Vagina (tissue), 2 donors: ENCODE measurements at regions of chr21 and their contacts with region 1.

Region 1: GRCh38 chr21:42107881-42108553 is 36.9 kb downstream of the UMODL1 start:
- DNase-seq: no peak
- H3K4me3 ChIP-seq: no peak overlapping the region
- H3K27ac ChIP-seq: no peak overlapping the region
- H3K4me1 ChIP-seq: peaks cover 14% of the 10 kb centered on the region
- H3K27me3 ChIP-seq: no peaks in the 10 kb centered on the region
- CTCF ChIP-seq: peak in 2 of 3 experiments; percentile 22 to 40
- POLR2A ChIP-seq: no peak

Region 2: DNA sequence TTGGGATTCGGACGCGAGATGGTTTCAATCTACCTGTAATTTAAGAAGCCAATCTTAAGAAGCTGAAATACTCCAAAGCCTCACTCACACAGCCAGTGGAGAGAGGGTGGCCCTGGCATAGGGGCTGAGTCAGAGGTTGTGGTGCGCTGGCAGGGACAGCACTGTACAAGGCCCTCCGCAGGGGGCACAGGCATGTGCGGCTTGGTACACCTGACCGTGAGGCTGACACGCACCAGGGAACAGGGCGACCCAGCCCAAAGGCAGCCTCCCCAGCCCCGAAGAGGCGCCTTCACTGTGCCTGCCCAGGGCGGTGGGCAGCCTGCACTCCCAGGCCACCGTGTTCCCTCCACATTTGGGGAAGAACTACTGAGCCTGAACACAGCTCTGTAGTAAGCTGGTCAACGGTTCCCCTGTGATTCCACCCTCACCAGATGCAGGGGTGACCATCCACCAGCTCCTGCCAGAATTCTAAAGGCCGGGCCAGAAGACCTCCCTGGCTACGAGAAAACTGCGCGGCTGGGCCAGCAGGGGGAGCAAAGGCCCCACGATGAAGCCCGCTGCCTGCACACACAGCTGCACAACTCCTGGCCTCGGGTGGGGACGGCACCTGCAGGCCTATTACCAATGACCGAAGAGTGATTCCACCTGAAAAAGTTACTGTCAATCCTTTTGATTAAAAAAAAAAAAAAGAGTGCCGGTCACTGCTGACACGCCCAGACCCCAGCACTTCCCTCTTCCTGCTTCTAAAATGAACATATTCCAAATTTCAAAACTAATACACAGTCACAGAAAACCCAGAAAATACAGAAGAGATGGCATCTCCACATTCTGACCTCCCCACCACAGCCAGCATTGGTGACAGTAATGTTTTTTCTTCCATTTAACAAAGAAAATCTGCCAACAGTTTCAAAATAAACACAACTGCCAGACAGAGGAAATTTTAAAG is 291.5 kb before region 1 on chr21:
- intact Hi-C with region 1: no loop called
- DNase-seq: no peak
- H3K4me3 ChIP-seq: no peak overlapping the region
- H3K27ac ChIP-seq: no peak overlapping the region
- H3K4me1 ChIP-seq: no peaks in the 10 kb centered on the region
- H3K27me3 ChIP-seq: no peaks in the 10 kb centered on the region
- CTCF ChIP-seq: peak; percentile 66 to 72 (median 69)
- POLR2A ChIP-seq: no peak

Region 3: GRCh38 chr21:42021366-42022090 is 86.5 kb before region 1 on chr21:
- intact Hi-C with region 1: loop called (anchors 10 kb)
- DNase-seq: no peak
- H3K4me3 ChIP-seq: no peak overlapping the region
- H3K27ac ChIP-seq: no peak overlapping the region
- H3K4me1 ChIP-seq: no peaks in the 10 kb centered on the region
- H3K27me3 ChIP-seq: no peaks in the 10 kb centered on the region
- CTCF ChIP-seq: no peak
- POLR2A ChIP-seq: no peak

Region 4: GRCh38 chr21:42360317-42360716 is 252.3 kb after region 1 on chr21:
- intact Hi-C with region 1: no loop called
- DNase-seq: no peak
- H3K4me3 ChIP-seq: no peak overlapping the region
- H3K27ac ChIP-seq: no peak overlapping the region
- H3K4me1 ChIP-seq: no peaks in the 10 kb centered on the region
- H3K27me3 ChIP-seq: no peaks in the 10 kb centered on the region
- CTCF ChIP-seq: no peak
- POLR2A ChIP-seq: no peak

Region 5: GRCh38 chr21:42537106-42537742 is 429.2 kb after region 1 on chr21:
- intact Hi-C with region 1: no loop called
- DNase-seq: no peak
- H3K4me3 ChIP-seq: no peak overlapping the region
- H3K27ac ChIP-seq: no peak overlapping the region
- H3K4me1 ChIP-seq: peaks cover 8% of the 10 kb centered on the region
- H3K27me3 ChIP-seq: no peaks in the 10 kb centered on the region
- CTCF ChIP-seq: no peak
- POLR2A ChIP-seq: no peak